ENCODE measurements at regions of chr2 and their contacts with region 1.

Region 1: GRCh38 chr2:43894743-43895142 is 56.0 kb downstream of the ABCG8 start:
- DNase-seq: no peak
- H3K4me3 Mint-ChIP-seq: no peak overlapping the region
- H3K27ac Mint-ChIP-seq: no peak overlapping the region
- H3K4me1 Mint-ChIP-seq: no peaks in the 10 kb centered on the region
- H3K27me3 Mint-ChIP-seq: no peaks in the 10 kb centered on the region

Region 2: GRCh38 chr2:43877782-43878464 is 16.8 kb before region 1 on chr2:
- CTCF ChIA-PET with region 1: interaction called, 12 read pairs
- POLR2A ChIA-PET with region 1: no interaction called
- DNase-seq: peak; percentile 74
- H3K4me3 Mint-ChIP-seq: no peak overlapping the region
- H3K27ac Mint-ChIP-seq: no peak overlapping the region
- H3K4me1 Mint-ChIP-seq: peaks cover 2% of the 10 kb centered on the region
- H3K27me3 Mint-ChIP-seq: no peaks in the 10 kb centered on the region

Region 3: DNA sequence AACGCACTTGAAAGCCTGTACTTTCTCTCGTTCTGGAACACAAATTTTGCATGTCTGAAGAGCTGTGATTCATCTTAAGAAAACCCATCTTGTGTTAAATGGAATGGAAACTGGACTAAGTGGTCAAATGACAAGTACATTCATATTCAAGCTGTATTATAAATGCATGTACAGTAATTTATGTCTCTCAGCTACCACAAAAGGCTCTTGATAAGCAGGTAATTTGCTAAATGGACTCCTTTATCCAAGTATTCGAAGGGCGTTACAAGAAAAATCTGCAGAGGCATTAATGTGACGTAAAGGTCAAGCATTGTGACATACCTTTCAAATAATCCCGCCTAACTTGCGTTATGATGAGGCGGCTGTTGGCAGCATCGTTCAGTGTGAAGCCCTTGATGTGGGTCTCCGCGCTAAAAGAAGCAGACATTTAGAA is 10.6 kb after region 1 on chr2:
- CTCF ChIA-PET with region 1: no interaction called
- POLR2A ChIA-PET with region 1: no interaction called
- DNase-seq: no peak
- H3K4me3 Mint-ChIP-seq: no peak overlapping the region
- H3K27ac Mint-ChIP-seq: no peak overlapping the region
- H3K4me1 Mint-ChIP-seq: peaks cover 19% of the 10 kb centered on the region
- H3K27me3 Mint-ChIP-seq: no peaks in the 10 kb centered on the region

Region 4: GRCh38 chr2:43958397-43959275 is 63.9 kb after region 1 on chr2:
- CTCF ChIA-PET with region 1: no interaction called
- POLR2A ChIA-PET with region 1: no interaction called
- DNase-seq: no peak
- H3K4me3 Mint-ChIP-seq: no peak overlapping the region
- H3K27ac Mint-ChIP-seq: no peak overlapping the region
- H3K4me1 Mint-ChIP-seq: peaks cover 12% of the 10 kb centered on the region
- H3K27me3 Mint-ChIP-seq: no peaks in the 10 kb centered on the region

Measured in activated CD4-positive, alpha-beta memory T cell treated with anti-CD3 and anti-CD28 coated beads, Interleukin-2, amount 10 ng/mL, durations not matched to agents 7 days and 5 days (primary cell).